Head of caudate nucleus (tissue), 42 donors: ENCODE measurements at regions of chr16 and their contacts with region 1.

Region 1: GRCh38 chr16:19521471-19522396 is at the start of gene GDE1:
- DNase-seq: peak; percentile 98 to 100 (median 99)

Region 2: DNA sequence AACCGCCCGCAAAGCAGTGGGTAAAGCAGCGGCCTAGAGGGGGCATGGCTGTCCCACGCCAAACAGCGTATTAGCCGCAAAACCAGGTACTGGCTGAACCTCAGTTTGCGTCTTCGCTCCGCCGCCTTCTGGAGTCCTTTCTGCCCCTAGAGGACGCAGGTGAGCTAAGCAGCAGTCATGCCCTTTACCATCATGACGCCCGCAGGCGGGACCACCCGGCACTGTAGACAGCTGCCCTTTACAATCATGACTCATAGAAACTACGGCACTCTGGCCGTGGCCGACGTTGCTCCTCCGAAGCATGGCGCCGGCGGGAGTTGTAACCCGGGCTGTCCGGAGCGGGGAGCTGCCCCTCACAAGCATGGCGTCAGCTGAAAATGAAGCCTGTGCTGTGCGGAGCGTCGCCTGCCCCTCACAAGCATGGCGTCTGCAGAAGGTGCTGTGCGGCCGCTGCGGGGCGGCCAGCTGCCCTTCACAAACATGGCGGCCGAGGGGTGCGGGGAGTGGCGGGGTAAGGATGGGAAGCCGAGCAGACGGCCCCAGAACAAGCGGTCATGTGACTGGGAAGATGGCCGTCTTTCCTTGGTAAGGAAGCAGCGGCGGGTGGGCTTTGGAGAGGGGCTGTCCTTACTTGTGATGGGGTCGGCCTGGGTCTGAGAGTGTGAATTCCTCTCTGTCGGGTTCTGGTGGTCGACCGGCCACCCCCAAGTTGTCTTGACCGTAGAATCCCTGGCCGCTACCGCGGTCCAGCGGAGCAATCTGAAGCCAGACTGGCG is 33.6 kb after region 1 on chr16 and contains the start of gene VPS35L:
- intact Hi-C with region 1: loop called (anchors 2 kb)
- DNase-seq: peak; percentile 91 to 99 (median 97)